HepG2 (cell line): ENCODE measurements at regions of chr4 and their contacts with region 1.

Region 1: DNA sequence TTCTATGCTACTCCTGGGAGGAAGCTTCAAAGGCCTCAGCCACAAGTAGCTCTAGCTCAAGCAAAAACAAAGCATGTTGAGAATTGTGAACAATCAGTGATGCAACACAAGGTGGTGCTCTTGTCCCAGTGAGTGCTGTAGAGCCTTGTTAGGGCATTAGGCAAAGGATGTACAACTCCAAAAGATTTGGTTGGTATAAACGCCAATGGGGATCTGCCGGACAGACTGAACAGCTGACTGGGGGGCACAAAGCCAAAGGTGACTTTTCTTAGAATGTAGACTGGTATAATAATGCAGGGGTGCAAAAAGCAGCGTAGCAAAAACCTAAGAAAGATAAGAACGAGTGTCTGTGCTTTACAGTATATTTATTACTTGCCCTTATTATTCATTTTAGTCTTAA is 62.6 kb upstream of the ALB start:
- DNase-seq: peak; percentile 85
- ATAC-seq: peak; percentile 83
- H3K4me3 ChIP-seq: peak overlapping the region; percentile 1 to 32 (median 17); a peak in 2 of 6 replicates
- H3K27ac ChIP-seq: peak overlapping the region; percentile 91
- H3K4me1 ChIP-seq: peaks cover 68% of the 10 kb centered on the region
- H3K27me3 ChIP-seq: no peaks in the 10 kb centered on the region
- CTCF ChIP-seq: peak; percentile 96
- EP300 ChIP-seq: no peak
- POLR2A ChIP-seq: no peak
- RAD21 ChIP-seq: peak; percentile 95

Region 2: GRCh38 chr4:73275318-73275654 is 66.2 kb before region 1 on chr4:
- CTCF ChIA-PET with region 1: no interaction called
- POLR2A ChIA-PET with region 1: no interaction called
- in situ Hi-C with region 1: no loop called
- intact Hi-C with region 1: no loop called
- DNase-seq: peak; percentile 57
- ATAC-seq: peak; percentile 93
- H3K4me3 ChIP-seq: no peak overlapping the region
- H3K27ac ChIP-seq: no peak overlapping the region
- H3K4me1 ChIP-seq: peaks cover 16% of the 10 kb centered on the region
- H3K27me3 ChIP-seq: no peaks in the 10 kb centered on the region
- CTCF ChIP-seq: no peak
- EP300 ChIP-seq: no peak
- POLR2A ChIP-seq: no peak
- RAD21 ChIP-seq: no peak

Region 3: DNA sequence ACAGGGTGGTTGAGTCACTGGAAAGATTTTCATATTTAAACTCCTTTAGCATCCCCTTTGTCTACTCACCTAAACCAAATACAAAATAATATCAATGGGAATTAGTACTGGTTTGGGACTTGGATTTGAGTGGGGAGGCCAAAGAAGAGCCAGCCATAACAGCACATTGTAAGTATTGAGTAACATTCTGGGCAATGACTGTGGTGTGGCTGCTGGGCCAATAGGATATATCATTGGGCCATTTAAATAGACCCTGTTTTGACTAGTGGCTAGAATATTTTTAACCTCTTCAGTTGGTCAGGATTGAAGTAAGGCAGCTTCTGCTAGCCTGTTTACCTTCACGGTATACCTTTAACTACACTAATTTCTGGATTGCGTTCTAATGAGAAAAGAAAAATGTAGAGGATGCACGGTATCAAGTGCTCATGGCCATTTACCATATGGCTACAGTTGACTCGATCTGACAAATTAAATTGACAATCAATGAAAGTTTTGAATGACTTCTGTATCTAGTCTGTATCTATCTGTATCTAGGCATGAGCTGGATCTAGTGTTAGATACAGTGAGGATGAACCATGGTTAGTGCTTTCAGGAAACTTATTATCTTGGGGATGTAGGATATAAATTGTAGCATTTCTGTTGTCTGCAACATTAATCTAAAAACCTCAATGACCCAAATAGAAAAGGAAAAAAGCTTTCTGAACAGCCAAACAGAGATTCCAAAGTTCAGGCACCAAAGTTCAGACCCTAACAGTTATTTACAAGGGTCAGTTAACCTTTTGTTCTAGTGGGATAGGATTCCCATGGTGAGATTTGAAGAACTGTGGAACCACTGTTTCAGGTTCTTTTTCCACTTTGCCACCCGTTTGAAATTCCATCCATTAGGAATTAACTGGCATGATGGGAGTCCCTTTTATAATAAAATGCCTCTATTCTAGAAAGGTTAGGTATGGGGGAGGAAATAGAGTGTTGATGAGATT is 55.8 kb after region 1 on chr4:
- CTCF ChIA-PET with region 1: no interaction called
- POLR2A ChIA-PET with region 1: interaction called, 21 read pairs
- in situ Hi-C with region 1: no loop called
- intact Hi-C with region 1: loop called (anchors 1 kb)
- DNase-seq: peak; percentile 69
- ATAC-seq: peak; percentile 73
- H3K4me3 ChIP-seq: no peak overlapping the region; a peak in 1 of 6 replicates
- H3K27ac ChIP-seq: peak overlapping the region; percentile 72
- H3K4me1 ChIP-seq: peaks cover 94% of the 10 kb centered on the region
- H3K27me3 ChIP-seq: no peaks in the 10 kb centered on the region
- CTCF ChIP-seq: no peak
- EP300 ChIP-seq: peak in 1 of 2 experiments; percentile 88; a peak in 2 of 4 replicates
- POLR2A ChIP-seq: no peak
- RAD21 ChIP-seq: no peak

Region 4: DNA sequence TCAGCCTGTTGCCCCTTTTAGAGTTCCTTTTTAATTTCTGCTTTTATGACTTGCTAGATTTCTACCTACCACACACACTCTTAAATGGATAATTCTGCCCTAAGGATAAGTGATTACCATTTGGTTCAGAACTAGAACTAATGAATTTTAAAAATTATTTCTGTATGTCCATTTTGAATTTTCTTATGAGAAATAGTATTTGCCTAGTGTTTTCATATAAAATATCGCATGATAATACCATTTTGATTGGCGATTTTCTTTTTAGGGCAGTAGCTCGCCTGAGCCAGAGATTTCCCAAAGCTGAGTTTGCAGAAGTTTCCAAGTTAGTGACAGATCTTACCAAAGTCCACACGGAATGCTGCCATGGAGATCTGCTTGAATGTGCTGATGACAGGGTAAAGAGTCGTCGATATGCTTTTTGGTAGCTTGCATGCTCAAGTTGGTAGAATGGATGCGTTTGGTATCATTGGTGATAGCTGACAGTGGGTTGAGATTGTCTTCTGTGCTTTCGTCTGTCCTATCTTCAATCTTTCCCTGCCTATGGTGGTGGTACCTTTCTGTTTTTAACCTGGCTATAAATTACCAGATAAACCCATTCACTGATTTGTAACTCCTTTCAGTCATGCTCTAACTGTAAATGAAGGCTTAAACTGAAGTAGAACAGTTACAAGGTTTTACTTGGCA is 70.4 kb after region 1 on chr4:
- CTCF ChIA-PET with region 1: interaction called, 3 read pairs
- POLR2A ChIA-PET with region 1: interaction called, 25 read pairs
- in situ Hi-C with region 1: loop called (anchors 5 kb)
- intact Hi-C with region 1: loop called (anchors 1 kb)
- DNase-seq: no peak
- ATAC-seq: peak; percentile 28
- H3K4me3 ChIP-seq: peak overlapping the region; percentile 24 to 86 (median 71); a peak in 5 of 6 replicates
- H3K27ac ChIP-seq: peak overlapping the region; percentile 89
- H3K4me1 ChIP-seq: peaks cover 82% of the 10 kb centered on the region
- H3K27me3 ChIP-seq: no peaks in the 10 kb centered on the region
- CTCF ChIP-seq: no peak
- EP300 ChIP-seq: no peak
- POLR2A ChIP-seq: peak; percentile 62 to 74; a peak in 3 of 4 replicates
- RAD21 ChIP-seq: no peak

Region 5: DNA sequence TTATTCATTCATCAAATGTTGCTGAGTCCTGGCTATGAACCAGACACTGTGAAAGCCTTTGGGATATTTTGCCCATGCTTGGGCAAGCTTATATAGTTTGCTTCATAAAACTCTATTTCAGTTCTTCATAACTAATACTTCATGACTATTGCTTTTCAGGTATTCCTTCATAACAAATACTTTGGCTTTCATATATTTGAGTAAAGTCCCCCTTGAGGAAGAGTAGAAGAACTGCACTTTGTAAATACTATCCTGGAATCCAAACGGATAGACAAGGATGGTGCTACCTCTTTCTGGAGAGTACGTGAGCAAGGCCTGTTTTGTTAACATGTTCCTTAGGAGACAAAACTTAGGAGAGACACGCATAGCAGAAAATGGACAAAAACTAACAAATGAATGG is 92.9 kb after region 1 on chr4:
- CTCF ChIA-PET with region 1: interaction called, 6 read pairs
- POLR2A ChIA-PET with region 1: interaction called, 39 read pairs
- in situ Hi-C with region 1: no loop called
- intact Hi-C with region 1: loop called (anchors 5 kb)
- DNase-seq: peak; percentile 45
- ATAC-seq: peak; percentile 13; the same call in 2 of the 3 replicates
- H3K4me3 ChIP-seq: no peak overlapping the region; a peak in 1 of 6 replicates
- H3K27ac ChIP-seq: peak overlapping the region; percentile 98
- H3K4me1 ChIP-seq: peaks cover 80% of the 10 kb centered on the region
- H3K27me3 ChIP-seq: no peaks in the 10 kb centered on the region
- CTCF ChIP-seq: peak; percentile 69
- EP300 ChIP-seq: peak in 1 of 2 experiments; percentile 35; a peak in 1 of 4 replicates
- POLR2A ChIP-seq: no peak
- RAD21 ChIP-seq: no peak

Region 6: DNA sequence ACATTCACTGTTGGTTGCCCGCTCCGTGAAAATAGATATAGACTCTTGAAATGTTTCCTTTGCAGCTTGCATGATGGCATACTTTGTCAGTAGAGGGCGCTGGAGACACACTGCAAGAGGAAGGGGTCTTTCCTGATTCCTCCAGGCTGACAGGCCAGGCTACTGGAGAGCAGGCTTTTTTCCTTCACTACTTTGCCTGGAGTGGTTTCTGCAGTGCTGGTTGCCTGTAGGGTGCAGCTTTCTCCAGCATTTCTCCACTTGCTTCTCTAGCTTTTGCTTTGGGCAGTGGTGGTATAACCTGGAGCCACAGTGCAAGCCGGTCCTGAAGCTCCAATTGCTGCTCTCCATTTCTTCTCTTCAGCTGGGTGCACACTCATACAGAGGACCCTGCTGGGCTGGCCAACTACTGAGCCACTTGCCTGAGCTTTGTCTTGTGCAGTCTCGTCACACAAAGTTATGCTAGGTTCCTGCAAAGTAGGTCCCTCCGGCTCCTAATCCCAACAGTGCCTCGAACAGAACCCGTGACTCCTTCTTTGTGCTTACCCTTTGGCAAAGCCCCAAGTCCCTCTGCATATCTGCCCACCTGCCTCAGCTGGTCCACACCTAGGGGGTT is 232.4 kb after region 1 on chr4:
- CTCF ChIA-PET with region 1: no interaction called
- POLR2A ChIA-PET with region 1: no interaction called
- in situ Hi-C with region 1: loop called (anchors 25 kb)
- intact Hi-C with region 1: loop called (anchors 1 kb)
- DNase-seq: peak; percentile 79
- ATAC-seq: peak; percentile 97
- H3K4me3 ChIP-seq: no peak overlapping the region
- H3K27ac ChIP-seq: no peak overlapping the region
- H3K4me1 ChIP-seq: no peaks in the 10 kb centered on the region
- H3K27me3 ChIP-seq: no peaks in the 10 kb centered on the region
- CTCF ChIP-seq: peak; percentile 92
- EP300 ChIP-seq: no peak
- POLR2A ChIP-seq: no peak
- RAD21 ChIP-seq: peak; percentile 89